OCI-LY7 (cell line): ENCODE measurements at regions of chr10 and their contacts with region 1.

Region 1: DNA sequence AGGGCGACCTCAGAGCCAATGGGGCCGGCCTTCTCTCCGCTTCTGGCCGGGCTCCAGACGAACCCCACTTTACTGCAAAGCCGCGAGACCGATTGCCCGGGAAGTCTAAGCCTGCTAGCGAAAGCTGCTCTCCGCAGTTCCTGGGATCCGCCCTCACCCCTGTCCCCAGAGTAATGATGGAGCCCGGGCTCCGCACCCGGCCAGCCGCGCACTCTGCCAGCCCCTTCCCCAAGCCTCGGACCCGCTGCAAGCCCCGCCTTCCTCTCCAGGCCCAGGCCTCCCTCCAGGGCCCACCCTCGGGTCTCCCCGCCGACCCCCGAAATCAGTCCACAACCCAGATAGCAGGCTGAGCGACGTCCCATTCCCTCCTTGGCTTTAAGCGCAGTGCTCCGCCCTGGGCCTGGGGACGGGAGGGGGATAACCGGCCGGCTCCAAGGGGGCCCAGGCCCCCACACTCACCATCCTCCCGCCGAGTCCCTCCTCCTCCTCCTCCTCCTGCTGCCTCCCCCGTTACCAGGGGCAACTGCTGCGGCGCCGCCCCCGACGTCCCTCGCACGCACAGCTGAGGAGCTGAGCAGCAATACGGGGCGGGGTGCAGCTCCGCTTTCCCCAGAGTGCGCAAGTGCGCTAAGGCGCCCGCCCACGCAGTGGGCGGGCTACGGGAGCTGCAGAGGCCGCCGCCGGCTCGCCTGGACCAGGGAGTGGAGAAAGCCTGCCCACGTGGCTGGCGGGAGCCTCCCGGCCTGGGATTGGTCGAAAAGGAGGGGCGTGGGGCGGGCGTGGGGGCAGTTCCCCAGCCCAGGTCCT is at the start of gene ARL3:
- DNase-seq: peak; percentile 99
- H3K4me3 ChIP-seq: peak within 1 kb of the TSS; percentile 77
- H3K27ac ChIP-seq: peak within 1 kb of the TSS; percentile 84
- H3K4me1 ChIP-seq: peaks cover 61% of the 10 kb centered on the region
- CTCF ChIP-seq: peak; percentile 67
- total RNA-seq, gene ARL3: 7.3 and 8.1 TPM in 2 replicates

Region 2: DNA sequence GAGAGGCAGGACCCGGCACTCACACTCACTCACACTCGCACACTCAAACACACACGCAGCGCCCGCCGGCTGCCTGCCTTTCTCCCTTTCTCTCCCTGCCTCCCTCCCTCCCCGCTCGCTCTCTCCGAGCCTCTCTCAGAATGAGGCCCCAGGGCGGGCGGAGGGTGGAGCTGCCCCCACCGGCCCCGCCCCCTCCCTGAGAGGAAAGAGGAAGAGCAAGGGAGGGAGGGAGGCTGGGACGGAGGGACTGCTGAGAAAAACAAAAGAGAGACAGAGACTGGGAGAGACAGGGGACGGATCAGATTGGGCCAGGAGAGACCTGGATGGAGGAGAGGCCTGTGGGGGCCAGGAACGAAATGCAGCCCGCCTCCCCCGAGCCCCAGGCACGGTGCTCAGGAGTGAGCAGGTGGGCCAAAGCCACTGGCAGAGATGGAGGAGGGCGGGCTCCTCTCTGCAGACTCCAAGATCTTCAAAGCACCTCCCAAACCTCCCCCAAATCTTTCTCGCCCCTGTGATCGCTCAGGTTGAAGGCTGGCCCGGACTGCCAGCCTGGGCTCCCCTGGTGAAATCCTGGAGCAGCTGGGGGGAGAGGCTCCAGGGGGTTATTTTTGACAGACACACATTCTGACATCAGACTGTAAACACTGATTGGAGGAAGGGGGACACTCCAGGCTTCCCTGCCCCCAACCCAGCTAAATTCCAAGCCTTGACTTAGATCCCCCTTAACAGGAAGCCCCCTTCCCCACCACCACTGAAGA is 599.0 kb before region 1 on chr10:
- CTCF ChIA-PET with region 1: no interaction called
- POLR2A ChIA-PET with region 1: no interaction called
- intact Hi-C with region 1: loop called (anchors 10 kb)
- DNase-seq: peak; percentile 87
- H3K4me3 ChIP-seq: peak overlapping the region; percentile 87
- H3K27ac ChIP-seq: peak overlapping the region; percentile 80
- H3K4me1 ChIP-seq: peaks cover 62% of the 10 kb centered on the region
- CTCF ChIP-seq: no peak

Region 3: DNA sequence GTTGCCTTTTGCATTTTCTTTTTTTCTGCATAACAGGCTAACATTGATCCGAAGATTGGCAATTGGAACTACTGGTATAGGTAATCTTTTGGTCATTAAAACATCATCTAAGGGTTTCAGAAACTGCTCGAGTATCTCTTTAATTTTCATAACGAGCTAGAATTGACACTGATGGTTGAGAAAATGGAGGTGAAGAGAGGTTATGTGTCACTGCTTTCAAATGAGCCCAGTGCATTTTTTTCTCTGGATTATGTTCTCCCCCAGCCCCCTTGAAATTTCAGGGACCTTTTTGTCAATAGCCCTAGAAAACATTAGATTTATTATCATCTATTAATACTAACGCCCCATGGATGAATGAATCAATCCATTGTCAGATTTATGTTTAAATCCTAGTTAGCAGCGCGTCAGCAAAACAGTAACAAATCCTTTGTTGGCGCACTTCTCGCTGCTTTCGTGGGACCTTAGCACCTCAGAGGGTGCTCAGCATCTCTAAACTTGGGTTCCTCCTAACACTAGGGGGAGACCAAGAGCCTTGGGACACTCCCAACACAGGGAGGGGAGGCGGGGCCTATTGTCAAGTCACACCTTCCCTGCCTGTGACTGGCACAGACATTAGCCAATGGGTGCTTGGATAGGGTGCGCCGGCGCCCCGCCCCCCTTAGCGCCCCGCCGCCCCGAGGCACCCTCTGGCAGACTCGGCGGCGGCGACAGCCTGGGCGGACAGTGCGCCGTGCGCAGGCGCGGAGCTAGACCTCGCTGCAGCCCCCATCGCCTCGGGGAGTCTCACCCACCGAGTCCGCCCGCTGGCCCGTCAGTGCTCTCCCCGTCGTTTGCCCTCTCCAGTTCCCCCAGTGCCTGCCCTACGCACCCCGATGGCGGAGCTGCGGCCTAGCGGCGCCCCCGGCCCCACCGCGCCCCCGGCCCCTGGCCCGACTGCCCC is 210.5 kb before region 1 on chr10 and contains the start of gene SUFU:
- CTCF ChIA-PET with region 1: no interaction called
- POLR2A ChIA-PET with region 1: no interaction called
- intact Hi-C with region 1: loop called (anchors 2 kb)
- DNase-seq: peak; percentile 100
- H3K4me3 ChIP-seq: peak within 1 kb of the TSS; percentile 98
- H3K27ac ChIP-seq: peak within 1 kb of the TSS; percentile 64
- H3K4me1 ChIP-seq: peaks cover 20% of the 10 kb centered on the region
- CTCF ChIP-seq: peak; percentile 92
- total RNA-seq, gene SUFU: 1.9 and 4.9 TPM in 2 replicates

Region 4: DNA sequence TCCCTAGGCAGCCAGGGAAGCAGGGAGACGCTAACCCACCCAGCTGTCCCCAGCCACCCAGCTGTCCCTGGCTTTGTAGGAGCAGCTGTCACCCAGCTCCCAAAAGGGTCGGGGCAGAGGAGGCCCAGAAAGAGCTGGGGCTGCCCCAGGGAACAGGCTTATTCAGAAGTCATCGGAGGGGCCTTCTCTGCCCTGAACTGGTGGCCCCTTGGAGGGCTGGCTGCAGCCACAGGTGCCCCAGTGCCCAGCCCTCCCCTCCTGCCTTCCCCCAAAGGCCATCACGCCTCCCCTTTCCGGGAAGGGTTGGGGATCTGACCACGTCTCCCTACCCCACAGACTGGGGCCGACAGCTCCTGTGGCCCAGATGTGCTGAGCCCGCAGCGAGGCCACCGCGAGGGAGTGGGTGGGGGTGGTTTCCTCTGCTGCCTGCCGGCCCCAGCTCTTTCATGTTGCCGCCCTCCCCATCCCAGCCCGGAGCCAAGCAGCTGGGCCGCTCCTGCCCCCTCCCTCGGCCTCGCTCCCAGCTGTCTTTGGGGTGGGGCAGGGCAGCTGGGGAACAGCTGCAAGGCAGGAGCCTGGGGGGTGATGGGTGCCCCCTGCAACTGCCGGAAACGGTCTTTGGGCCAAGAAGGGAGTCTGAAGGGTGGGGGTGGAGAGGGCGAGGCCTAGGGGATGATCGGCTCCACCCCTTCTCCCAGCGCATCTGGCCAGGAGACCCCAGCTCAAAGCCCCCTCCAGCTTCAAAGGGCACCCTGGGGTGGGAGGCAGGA is 52.9 kb before region 1 on chr10:
- CTCF ChIA-PET with region 1: interaction called, 4 read pairs
- POLR2A ChIA-PET with region 1: interaction called, 10 read pairs
- intact Hi-C with region 1: loop called (anchors 5 kb)
- DNase-seq: peak; percentile 94
- H3K4me3 ChIP-seq: peak overlapping the region; percentile 35
- H3K27ac ChIP-seq: peak overlapping the region; percentile 80
- H3K4me1 ChIP-seq: peaks cover 44% of the 10 kb centered on the region
- CTCF ChIP-seq: no peak

Region 5: DNA sequence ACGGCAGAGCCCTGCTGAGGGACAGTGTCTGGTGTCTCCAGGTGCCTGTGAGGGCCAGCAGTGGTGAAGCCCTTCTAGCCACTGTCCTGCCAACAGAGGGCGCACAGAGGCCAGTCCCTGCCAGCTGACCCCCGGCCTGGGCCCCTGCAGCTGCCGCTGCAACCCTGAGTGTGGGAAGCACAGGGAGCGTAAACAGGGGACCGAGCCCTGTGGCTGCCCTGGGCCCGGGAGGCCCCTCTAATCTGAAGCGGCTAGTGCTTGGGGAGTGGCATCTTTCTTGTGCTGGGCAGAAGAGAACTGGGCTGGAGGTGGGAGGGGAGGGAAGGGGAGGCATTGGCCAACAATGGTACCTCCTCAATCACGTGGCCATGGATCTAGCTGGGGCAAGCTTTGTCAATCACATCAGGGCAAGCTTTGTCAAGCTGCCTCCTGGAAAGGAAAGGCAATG is 35.2 kb before region 1 on chr10:
- CTCF ChIA-PET with region 1: no interaction called
- POLR2A ChIA-PET with region 1: interaction called, 5 read pairs
- intact Hi-C with region 1: loop called (anchors 2 kb)
- DNase-seq: peak; percentile 64
- H3K4me3 ChIP-seq: no peak overlapping the region
- H3K27ac ChIP-seq: no peak overlapping the region
- H3K4me1 ChIP-seq: peaks cover 22% of the 10 kb centered on the region
- CTCF ChIP-seq: peak; percentile 75

Region 6: GRCh38 chr10:102743588-102744373 is 29.8 kb after region 1 on chr10 and contains the start of gene WBP1L:
- CTCF ChIA-PET with region 1: no interaction called
- POLR2A ChIA-PET with region 1: interaction called, 14 read pairs
- intact Hi-C with region 1: loop called (anchors 2 kb)
- DNase-seq: peak; percentile 99
- H3K4me3 ChIP-seq: peak within 1 kb of the TSS; percentile 96
- H3K27ac ChIP-seq: peak within 1 kb of the TSS; percentile 34
- H3K4me1 ChIP-seq: peaks cover 25% of the 10 kb centered on the region
- CTCF ChIP-seq: no peak
- total RNA-seq, gene WBP1L: 12.5 and 17.6 TPM in 2 replicates